ENCODE measurements at regions of chr17 and their contacts with region 1.

Region 1: GRCh38 chr17:8337802-8338752 is 1.6 kb upstream of the ODF4 start:
- DNase-seq: no peak
- H3K4me3 ChIP-seq: no peak overlapping the region
- H3K27ac ChIP-seq: no peak overlapping the region
- H3K4me1 ChIP-seq: no peaks in the 10 kb centered on the region
- H3K27me3 ChIP-seq: no peaks in the 10 kb centered on the region
- CTCF ChIP-seq: no peak

Region 2: GRCh38 chr17:8283356-8283755 is 54.7 kb before region 1 on chr17:
- CTCF ChIA-PET with region 1: no interaction called
- POLR2A ChIA-PET with region 1: no interaction called
- intact Hi-C with region 1: no loop called
- DNase-seq: no peak
- H3K4me3 ChIP-seq: no peak overlapping the region
- H3K27ac ChIP-seq: no peak overlapping the region
- H3K4me1 ChIP-seq: 0 out of 2 replicates have a peak, but pooled peaks cover 5% of the 10 kb centered on the region
- H3K27me3 ChIP-seq: no peaks in the 10 kb centered on the region
- CTCF ChIP-seq: no peak

Region 3: GRCh38 chr17:8294814-8295316 is 43.2 kb before region 1 on chr17:
- CTCF ChIA-PET with region 1: no interaction called
- POLR2A ChIA-PET with region 1: interaction called, 11 read pairs
- intact Hi-C with region 1: no loop called
- DNase-seq: no peak
- H3K4me3 ChIP-seq: peak overlapping the region; percentile 66; the same call in 1 of the 2 replicates
- H3K27ac ChIP-seq: no peak overlapping the region
- H3K4me1 ChIP-seq: no peaks in the 10 kb centered on the region; the same call in 1 of the 2 replicates
- H3K27me3 ChIP-seq: no peaks in the 10 kb centered on the region
- CTCF ChIP-seq: no peak

Measured in PC-9 (cell line).